ENCODE measurements at regions of chr19 and their contacts with region 1.

Region 1: DNA sequence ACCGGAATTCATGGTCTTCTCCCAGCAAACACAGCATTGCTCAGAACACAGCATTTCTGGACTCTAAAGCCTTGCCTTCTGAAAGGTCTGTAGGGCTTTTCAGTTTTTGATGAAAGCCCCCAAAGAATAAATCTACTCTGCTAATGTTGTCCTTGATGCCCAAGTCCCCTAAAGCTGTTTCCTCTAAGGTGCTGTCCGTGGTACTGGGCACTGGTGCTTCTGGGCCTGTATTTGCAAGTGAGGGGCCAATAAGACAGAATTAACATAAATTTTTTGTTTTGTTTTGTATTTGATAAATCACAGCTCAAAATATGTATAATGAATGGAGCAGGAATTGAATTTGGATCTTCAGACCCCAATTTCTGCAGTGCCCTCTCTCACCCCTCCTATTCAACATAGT is 12.1 kb upstream of the LGALS13 start:
- DNase-seq: no peak
- H3K4me3 Mint-ChIP-seq: no peak overlapping the region
- H3K27ac Mint-ChIP-seq: no peak overlapping the region
- H3K4me1 Mint-ChIP-seq: peaks cover 6% of the 10 kb centered on the region
- H3K27me3 Mint-ChIP-seq: peaks cover 82% of the 10 kb centered on the region
- CTCF ChIP-seq: no peak

Region 2: GRCh38 chr19:39416152-39417120 is 173.8 kb before region 1 on chr19:
- CTCF ChIA-PET with region 1: no interaction called
- intact Hi-C with region 1: no loop called
- DNase-seq: no peak
- H3K4me3 Mint-ChIP-seq: no peak overlapping the region
- H3K27ac Mint-ChIP-seq: no peak overlapping the region
- H3K4me1 Mint-ChIP-seq: peaks cover 18% of the 10 kb centered on the region
- H3K27me3 Mint-ChIP-seq: no peaks in the 10 kb centered on the region
- CTCF ChIP-seq: no peak

Region 3: GRCh38 chr19:39557441-39558151 is 32.7 kb before region 1 on chr19:
- CTCF ChIA-PET with region 1: no interaction called
- intact Hi-C with region 1: no loop called
- DNase-seq: peak; percentile 46
- H3K4me3 Mint-ChIP-seq: peak overlapping the region; percentile 49
- H3K27ac Mint-ChIP-seq: peak overlapping the region; percentile 28
- H3K4me1 Mint-ChIP-seq: peaks cover 22% of the 10 kb centered on the region
- H3K27me3 Mint-ChIP-seq: peaks cover 19% of the 10 kb centered on the region
- CTCF ChIP-seq: no peak

Region 4: DNA sequence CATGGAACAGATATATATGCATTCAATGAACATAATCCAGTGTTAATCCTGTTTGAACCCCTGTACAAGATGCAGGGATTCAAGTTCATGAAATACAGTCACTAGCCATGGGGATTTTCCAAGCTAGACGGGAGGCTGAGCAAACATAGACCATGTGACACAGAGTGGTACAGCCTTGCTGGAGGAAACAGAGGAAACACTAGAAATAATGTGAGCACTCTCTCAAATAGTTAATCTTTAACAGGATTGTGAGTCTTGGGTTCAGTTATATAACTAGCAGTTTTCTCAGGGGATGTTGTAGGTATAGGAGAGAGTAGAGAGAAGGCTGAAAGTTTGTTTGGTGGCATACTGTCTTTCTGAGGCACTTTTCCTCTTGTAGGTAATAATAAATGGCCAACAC is 51.5 kb after region 1 on chr19:
- CTCF ChIA-PET with region 1: no interaction called
- intact Hi-C with region 1: loop called (anchors 5 kb)
- DNase-seq: peak; percentile 62
- H3K4me3 Mint-ChIP-seq: peak overlapping the region; percentile 8
- H3K27ac Mint-ChIP-seq: no peak overlapping the region
- H3K4me1 Mint-ChIP-seq: peaks cover 16% of the 10 kb centered on the region
- H3K27me3 Mint-ChIP-seq: peaks cover 70% of the 10 kb centered on the region
- CTCF ChIP-seq: no peak

Measured in Calu3 (cell line).